Activated B cell treated with CpG ODN at 0.5 μM for 24 hours (primary cell): ENCODE measurements at regions of chr6 and their contacts with region 1.

Region 1: GRCh38 chr6:149863697-149864577 is at the start of gene LRP11:
- DNase-seq: peak; percentile 80
- ATAC-seq: peak; percentile 91
- H3K4me3 Mint-ChIP-seq: peak within 1 kb of the TSS; percentile 81
- H3K27ac Mint-ChIP-seq: no peak within 1 kb of the TSS
- H3K4me1 Mint-ChIP-seq: peaks cover 14% of the 10 kb centered on the region
- H3K27me3 Mint-ChIP-seq: peaks cover 30% of the 10 kb centered on the region
- CTCF ChIP-seq: no peak
- total RNA-seq, gene LRP11: 0.29 TPM in 2 replicates

Region 2: DNA sequence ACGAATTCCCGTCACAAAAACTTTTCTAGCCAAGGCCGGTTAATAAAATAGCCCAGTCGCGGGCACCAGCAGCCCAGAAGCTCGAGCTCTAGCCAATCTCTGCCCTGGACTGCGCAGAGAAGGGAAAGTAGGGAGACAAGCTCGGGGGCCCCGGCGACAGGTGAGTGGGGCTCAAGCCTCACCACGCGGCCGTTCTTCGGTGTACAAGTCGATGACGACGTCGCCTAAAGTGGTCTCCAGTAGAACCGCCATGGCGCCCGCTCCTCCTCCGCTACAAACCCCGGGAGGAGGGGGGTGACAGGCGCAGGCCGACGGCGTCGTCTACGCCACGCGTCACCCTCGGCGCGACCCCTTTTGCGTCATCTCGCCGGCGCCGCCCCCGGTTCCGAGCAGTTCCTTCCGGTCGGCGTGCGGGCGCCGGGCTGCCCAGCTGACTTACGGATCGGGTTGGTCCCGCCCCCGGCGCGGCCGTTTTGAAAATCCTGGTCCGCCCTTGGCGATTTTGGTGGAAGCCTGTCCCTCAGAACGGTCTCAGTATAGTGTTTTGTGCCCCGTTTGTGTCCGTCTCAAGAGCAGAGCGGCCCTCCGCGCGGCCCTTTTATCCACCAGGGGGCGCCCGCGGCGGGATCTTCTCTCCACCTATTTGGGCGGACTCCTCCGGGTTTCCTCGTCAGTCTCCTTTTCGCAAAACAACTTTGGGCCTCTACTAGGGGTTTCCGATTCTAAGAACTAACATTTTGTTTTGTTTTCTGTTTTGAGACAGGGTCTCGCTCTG is 318.0 kb before region 1 on chr6 and contains the start of gene PPIL4:
- CTCF ChIA-PET with region 1: no interaction called
- POLR2A ChIA-PET with region 1: no interaction called
- intact Hi-C with region 1: loop called (anchors 1 kb)
- DNase-seq: peak; percentile 98
- ATAC-seq: peak; percentile 88
- H3K4me3 Mint-ChIP-seq: peak within 1 kb of the TSS; percentile 95
- H3K27ac Mint-ChIP-seq: peak within 1 kb of the TSS; percentile 96
- H3K4me1 Mint-ChIP-seq: peaks cover 37% of the 10 kb centered on the region
- H3K27me3 Mint-ChIP-seq: no peaks in the 10 kb centered on the region
- CTCF ChIP-seq: peak; percentile 77
- total RNA-seq, gene PPIL4: 20.9 and 24.0 TPM in 2 replicates

Region 3: GRCh38 chr6:149723771-149724417 is 140.0 kb before region 1 on chr6:
- CTCF ChIA-PET with region 1: no interaction called
- POLR2A ChIA-PET with region 1: no interaction called
- intact Hi-C with region 1: loop called (anchors 1 kb)
- DNase-seq: no peak
- ATAC-seq: peak; percentile 91
- H3K4me3 Mint-ChIP-seq: no peak overlapping the region
- H3K27ac Mint-ChIP-seq: peak overlapping the region; percentile 65
- H3K4me1 Mint-ChIP-seq: peaks cover 15% of the 10 kb centered on the region
- H3K27me3 Mint-ChIP-seq: no peaks in the 10 kb centered on the region
- CTCF ChIP-seq: peak; percentile 48

Region 4: DNA sequence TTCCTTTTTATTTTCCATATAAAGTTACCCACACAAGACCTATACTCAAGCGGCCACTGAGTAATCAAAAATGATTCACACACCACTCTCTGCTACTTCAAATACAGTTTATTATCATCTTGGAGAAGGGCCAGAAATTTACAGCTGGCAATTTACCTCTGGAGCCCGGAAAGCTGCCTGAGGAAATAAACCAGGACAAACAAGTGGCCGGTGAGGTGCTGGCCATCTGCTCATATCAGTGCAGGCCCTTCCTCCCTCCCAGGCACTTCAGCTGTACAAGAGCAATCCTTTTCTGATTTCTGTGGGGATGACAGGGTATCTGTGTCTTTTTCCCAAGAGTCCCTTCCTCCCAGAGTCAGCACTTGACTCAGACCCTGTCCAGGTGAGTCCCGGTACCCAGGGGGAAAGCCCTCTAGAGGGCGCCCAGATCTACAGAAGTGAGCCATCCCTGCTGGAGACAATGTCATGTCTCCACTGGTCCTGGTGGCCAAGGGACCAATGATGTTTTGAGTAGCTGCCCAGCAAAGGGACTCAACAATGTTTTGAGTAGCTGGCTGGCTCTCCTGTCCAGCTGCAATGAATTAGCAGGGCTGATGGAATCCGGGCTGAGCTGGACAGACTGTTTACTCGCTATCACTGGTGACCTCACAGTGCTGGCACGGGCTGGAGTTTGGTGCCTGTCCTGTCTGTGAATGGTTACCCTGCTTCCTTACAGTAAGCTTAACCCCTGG is 23.4 kb before region 1 on chr6:
- CTCF ChIA-PET with region 1: interaction called, 25 read pairs
- POLR2A ChIA-PET with region 1: no interaction called
- intact Hi-C with region 1: loop called (anchors 1 kb)
- DNase-seq: no peak
- ATAC-seq: peak; percentile 47
- H3K4me3 Mint-ChIP-seq: no peak overlapping the region
- H3K27ac Mint-ChIP-seq: no peak overlapping the region
- H3K4me1 Mint-ChIP-seq: no peaks in the 10 kb centered on the region
- H3K27me3 Mint-ChIP-seq: peaks cover 22% of the 10 kb centered on the region
- CTCF ChIP-seq: peak; percentile 29

Region 5: DNA sequence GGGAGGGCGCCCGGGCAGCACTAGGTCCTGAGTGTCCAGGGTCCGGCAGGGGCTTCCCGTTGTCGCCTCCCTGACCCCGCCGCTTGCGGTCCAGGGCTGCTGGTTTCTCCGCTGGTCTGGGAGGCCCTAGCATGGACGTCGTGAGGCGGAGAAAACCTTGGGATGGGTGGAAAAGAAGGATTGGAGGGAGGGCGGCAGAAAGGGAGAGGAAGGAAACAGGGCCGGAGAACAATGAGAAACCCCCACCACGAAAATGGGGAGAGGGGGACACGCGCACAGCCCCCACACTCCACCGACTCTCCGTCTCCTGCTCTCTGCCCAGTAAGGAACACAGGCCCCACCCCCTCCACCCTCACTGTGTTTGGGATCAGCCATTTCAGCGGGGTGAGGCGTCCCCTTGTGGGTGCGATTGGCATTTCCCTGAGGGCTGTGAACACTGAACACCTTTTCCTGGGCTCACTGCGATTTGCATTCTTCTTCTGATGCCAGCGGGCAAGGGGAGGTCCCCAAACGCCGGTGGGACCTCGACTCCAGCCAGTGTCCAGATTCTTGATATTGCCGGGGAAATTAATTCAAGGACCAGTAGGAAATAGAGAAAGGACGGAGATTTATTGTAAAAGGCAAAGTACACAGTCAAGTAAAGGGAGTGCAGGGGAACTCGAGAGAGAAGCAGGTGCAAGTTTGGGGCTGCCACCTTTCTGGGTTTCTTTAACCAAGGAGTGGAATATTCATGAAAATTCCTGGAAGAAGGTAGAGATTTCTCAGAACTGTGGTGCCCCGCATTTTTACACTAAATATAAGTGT is 62.2 kb after region 1 on chr6:
- CTCF ChIA-PET with region 1: interaction called, 3 read pairs
- POLR2A ChIA-PET with region 1: no interaction called
- intact Hi-C with region 1: loop called (anchors 2 kb)
- DNase-seq: no peak
- ATAC-seq: peak; percentile 58
- H3K4me3 Mint-ChIP-seq: no peak overlapping the region
- H3K27ac Mint-ChIP-seq: no peak overlapping the region
- H3K4me1 Mint-ChIP-seq: peaks cover 31% of the 10 kb centered on the region
- H3K27me3 Mint-ChIP-seq: peaks cover 87% of the 10 kb centered on the region
- CTCF ChIP-seq: no peak

Region 6: GRCh38 chr6:150004783-150005717 is 141.1 kb after region 1 on chr6:
- CTCF ChIA-PET with region 1: no interaction called
- POLR2A ChIA-PET with region 1: no interaction called
- intact Hi-C with region 1: loop called (anchors 10 kb)
- DNase-seq: peak; percentile 82
- ATAC-seq: peak; percentile 79
- H3K4me3 Mint-ChIP-seq: peak overlapping the region; percentile 92
- H3K27ac Mint-ChIP-seq: peak overlapping the region; percentile 95
- H3K4me1 Mint-ChIP-seq: peaks cover 34% of the 10 kb centered on the region
- H3K27me3 Mint-ChIP-seq: peaks cover 12% of the 10 kb centered on the region
- CTCF ChIP-seq: no peak

Region 7: GRCh38 chr6:150119173-150119572 is 255.2 kb after region 1 on chr6:
- CTCF ChIA-PET with region 1: no interaction called
- POLR2A ChIA-PET with region 1: no interaction called
- intact Hi-C with region 1: no loop called
- DNase-seq: no peak
- ATAC-seq: no peak
- H3K4me3 Mint-ChIP-seq: no peak overlapping the region
- H3K27ac Mint-ChIP-seq: no peak overlapping the region
- H3K4me1 Mint-ChIP-seq: peaks cover 27% of the 10 kb centered on the region
- H3K27me3 Mint-ChIP-seq: peaks cover 3% of the 10 kb centered on the region
- CTCF ChIP-seq: no peak